GM10248 (cell line): ENCODE measurements at regions of chr2 and their contacts with region 1.

Region 1: DNA sequence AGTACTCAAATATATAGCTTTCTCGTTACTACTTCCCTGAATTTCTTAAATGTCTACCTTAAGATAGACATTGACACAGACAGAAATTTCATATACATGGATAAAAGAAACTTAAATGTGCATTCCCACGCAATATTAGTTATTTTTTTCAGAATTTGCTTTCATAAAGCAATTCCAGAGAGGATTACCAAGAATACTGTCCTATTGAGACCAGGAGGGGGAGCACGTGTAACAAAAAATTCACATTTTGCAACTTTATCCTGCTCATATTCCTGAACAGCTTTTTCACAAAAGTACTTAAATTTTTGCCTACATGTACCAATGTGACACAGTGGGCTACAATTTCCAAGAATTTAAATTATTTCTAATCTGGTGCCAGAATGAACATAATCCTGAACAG is 30.7 kb upstream of the ERCC3 start:
- DNase-seq: no peak
- CTCF ChIP-seq: peak; percentile 34

Region 2: GRCh38 chr2:127313406-127313805 is 11.2 kb before region 1 on chr2:
- CTCF ChIA-PET with region 1: interaction called, 11 read pairs
- POLR2A ChIA-PET with region 1: no interaction called
- DNase-seq: peak; percentile 60
- CTCF ChIP-seq: no peak